AG04449 (cell line): ENCODE measurements at regions of chr6 and their contacts with region 1.

Region 1: DNA sequence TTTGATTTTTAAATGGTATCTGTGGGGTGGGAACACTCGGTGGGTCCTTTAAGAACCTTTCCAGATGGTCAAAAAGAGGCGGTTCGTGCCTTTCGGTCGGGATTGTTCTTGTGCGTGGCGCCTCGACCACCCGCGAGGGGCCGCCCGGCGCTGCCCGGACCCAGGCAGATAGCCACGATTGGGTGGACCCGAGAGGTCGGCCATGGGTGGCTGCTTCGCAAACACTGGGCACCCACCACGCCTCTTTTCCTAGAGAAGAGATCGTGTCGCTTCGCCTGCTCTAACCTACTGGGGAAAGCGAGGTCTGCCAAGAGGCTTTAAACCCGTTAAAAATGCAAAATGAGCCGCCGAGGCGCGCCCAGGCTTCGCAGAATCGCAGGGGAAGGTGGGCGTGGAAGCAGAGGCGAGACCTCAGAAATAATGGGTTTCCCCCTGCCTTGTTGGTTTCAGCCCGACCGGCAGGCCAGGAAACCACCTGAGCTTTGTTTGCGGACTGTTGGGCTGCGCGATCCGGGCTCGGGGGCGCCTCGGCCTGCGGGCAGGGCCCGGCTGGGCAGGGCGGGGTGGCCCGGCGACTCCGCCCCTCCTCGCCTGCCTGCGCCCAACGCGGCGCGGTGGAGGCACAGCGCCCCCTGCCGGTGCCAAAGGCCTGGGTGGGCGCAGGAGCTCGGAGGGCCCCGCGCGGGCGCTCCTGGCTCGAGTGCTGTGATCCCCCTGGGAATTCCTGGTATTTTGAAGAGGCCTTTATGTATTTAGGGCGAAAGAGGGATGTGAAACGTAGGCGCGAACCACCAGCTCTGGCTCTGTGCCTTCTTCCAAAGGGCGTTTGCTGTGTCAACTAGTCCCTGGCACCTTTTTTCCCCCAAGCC is 1.6 kb downstream of the MARCKS start:
- DNase-seq: no peak
- H3K4me3 ChIP-seq: peak overlapping the region; percentile 99
- CTCF ChIP-seq: peak; percentile 84

Region 2: GRCh38 chr6:113120582-113121285 is 738.0 kb before region 1 on chr6:
- CTCF ChIA-PET with region 1: interaction called, 7 read pairs
- POLR2A ChIA-PET with region 1: interaction called, 11 read pairs
- DNase-seq: peak; percentile 98
- H3K4me3 ChIP-seq: no peak overlapping the region
- CTCF ChIP-seq: no peak

Region 3: DNA sequence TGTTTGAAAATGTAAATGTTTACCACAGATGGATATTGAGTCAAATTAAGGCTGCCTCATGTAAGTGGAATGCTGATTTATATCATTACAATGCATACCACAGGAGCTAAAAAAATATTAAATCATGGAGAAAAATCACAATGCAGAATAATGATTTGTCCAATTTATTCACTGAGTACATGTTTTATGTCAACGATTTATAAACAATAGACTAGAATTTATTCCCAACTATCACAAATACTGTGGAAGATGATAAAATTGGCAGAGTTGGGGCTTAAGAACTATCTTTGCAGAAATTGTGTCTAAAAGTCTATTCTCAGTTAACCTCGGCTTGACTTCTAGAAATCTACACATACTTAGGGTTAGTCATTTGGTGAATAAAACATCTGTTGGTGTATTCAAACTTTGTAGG is 473.7 kb before region 1 on chr6:
- CTCF ChIA-PET with region 1: interaction called, 10 read pairs
- POLR2A ChIA-PET with region 1: interaction called, 3 read pairs
- DNase-seq: no peak
- H3K4me3 ChIP-seq: no peak overlapping the region
- CTCF ChIP-seq: no peak

Region 4: DNA sequence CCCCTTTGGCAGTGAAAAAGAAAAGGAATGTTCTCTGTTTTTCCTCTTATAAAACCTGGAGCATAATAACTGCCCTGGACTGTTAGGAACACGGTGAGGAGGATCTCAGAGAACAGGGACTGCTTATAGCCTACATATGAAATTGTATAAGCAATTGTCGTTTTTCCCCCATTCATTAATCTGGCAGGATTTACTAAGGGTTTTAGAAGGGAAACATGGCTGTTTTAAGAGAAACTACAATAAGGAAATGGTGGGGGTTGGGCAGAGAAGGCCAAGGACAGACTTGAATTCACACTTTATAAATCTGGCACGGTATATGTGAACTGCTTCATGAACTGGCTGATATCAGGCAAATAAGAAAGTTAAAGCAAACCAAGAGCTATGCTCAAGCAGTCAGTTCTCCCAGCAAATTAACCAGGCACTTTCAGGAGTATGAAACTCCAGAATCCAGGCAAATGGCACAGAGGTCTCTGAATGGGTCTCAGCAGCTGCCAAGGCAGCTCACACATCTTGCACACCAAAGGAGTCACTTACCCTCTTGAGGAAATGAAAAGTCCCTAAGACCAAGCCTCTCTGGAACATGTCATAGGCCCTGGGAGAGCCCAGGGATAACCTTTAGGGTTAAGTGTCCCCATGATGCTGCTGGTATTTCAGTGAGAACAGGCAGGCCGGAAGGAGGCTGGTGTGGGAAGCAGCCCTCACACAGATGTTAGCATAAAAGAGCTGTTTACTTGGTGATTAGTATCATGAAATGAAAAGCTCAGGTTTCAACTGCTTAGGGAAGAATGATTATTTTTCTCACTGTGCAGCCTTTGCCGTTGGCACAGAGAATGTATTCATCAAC is 262.1 kb before region 1 on chr6:
- CTCF ChIA-PET with region 1: interaction called, 10 read pairs
- POLR2A ChIA-PET with region 1: no interaction called
- DNase-seq: no peak
- H3K4me3 ChIP-seq: no peak overlapping the region
- CTCF ChIP-seq: no peak

Region 5: GRCh38 chr6:113870917-113871316 is 12.2 kb after region 1 on chr6:
- CTCF ChIA-PET with region 1: interaction called, 12 read pairs
- POLR2A ChIA-PET with region 1: interaction called, 4 read pairs
- DNase-seq: no peak
- H3K4me3 ChIP-seq: no peak overlapping the region
- CTCF ChIP-seq: no peak

Region 6: GRCh38 chr6:113909234-113909856 is 50.6 kb after region 1 on chr6:
- CTCF ChIA-PET with region 1: interaction called, 19 read pairs
- POLR2A ChIA-PET with region 1: interaction called, 3 read pairs
- DNase-seq: peak; percentile 45
- H3K4me3 ChIP-seq: no peak overlapping the region
- CTCF ChIP-seq: peak; percentile 25